CD4-positive, alpha-beta T cell (primary cell): ENCODE measurements at regions of chr9 and their contacts with region 1.

Region 1: GRCh38 chr9:18255158-18255629 is 218.8 kb upstream of the ADAMTSL1 start:
- DNase-seq: peak; percentile 41 to 81 (median 58)
- ATAC-seq: peak; percentile 69
- H3K4me3 ChIP-seq: no peak overlapping the region
- H3K4me3 Mint-ChIP-seq: no peak overlapping the region
- H3K27ac ChIP-seq: no peak overlapping the region
- H3K27ac Mint-ChIP-seq: no peak overlapping the region
- H3K4me1 ChIP-seq: no peaks in the 10 kb centered on the region
- H3K4me1 Mint-ChIP-seq: peaks cover 7% of the 10 kb centered on the region
- H3K27me3 ChIP-seq: peaks cover 0 to 3% of the 10 kb centered on the region in 2 experiments
- H3K27me3 Mint-ChIP-seq: peaks cover 27% of the 10 kb centered on the region
- CTCF ChIP-seq: peak; percentile 99

Region 2: GRCh38 chr9:18314316-18314715 is 59.1 kb after region 1 on chr9:
- CTCF ChIA-PET with region 1: no interaction called
- POLR2A ChIA-PET with region 1: no interaction called
- intact Hi-C with region 1: no loop called
- DNase-seq: no peak
- ATAC-seq: no peak
- H3K4me3 ChIP-seq: no peak overlapping the region
- H3K4me3 Mint-ChIP-seq: no peak overlapping the region
- H3K27ac ChIP-seq: no peak overlapping the region
- H3K27ac Mint-ChIP-seq: no peak overlapping the region
- H3K4me1 ChIP-seq: no peaks in the 10 kb centered on the region
- H3K4me1 Mint-ChIP-seq: no peaks in the 10 kb centered on the region
- H3K27me3 ChIP-seq: no peaks in the 10 kb centered on the region
- H3K27me3 Mint-ChIP-seq: no peaks in the 10 kb centered on the region
- CTCF ChIP-seq: no peak

Region 3: GRCh38 chr9:18947772-18948391 is 692.7 kb after region 1 on chr9:
- CTCF ChIA-PET with region 1: no interaction called
- POLR2A ChIA-PET with region 1: no interaction called
- intact Hi-C with region 1: no loop called
- DNase-seq: peak in 3 of 14 experiments; percentile 3 to 37 (median 28)
- ATAC-seq: no peak
- H3K4me3 ChIP-seq: no peak overlapping the region
- H3K4me3 Mint-ChIP-seq: no peak overlapping the region
- H3K27ac ChIP-seq: no peak overlapping the region
- H3K27ac Mint-ChIP-seq: no peak overlapping the region
- H3K4me1 ChIP-seq: no peaks in the 10 kb centered on the region
- H3K4me1 Mint-ChIP-seq: no peaks in the 10 kb centered on the region
- H3K27me3 ChIP-seq: no peaks in the 10 kb centered on the region
- H3K27me3 Mint-ChIP-seq: peaks cover 7% of the 10 kb centered on the region
- CTCF ChIP-seq: no peak

Region 4: DNA sequence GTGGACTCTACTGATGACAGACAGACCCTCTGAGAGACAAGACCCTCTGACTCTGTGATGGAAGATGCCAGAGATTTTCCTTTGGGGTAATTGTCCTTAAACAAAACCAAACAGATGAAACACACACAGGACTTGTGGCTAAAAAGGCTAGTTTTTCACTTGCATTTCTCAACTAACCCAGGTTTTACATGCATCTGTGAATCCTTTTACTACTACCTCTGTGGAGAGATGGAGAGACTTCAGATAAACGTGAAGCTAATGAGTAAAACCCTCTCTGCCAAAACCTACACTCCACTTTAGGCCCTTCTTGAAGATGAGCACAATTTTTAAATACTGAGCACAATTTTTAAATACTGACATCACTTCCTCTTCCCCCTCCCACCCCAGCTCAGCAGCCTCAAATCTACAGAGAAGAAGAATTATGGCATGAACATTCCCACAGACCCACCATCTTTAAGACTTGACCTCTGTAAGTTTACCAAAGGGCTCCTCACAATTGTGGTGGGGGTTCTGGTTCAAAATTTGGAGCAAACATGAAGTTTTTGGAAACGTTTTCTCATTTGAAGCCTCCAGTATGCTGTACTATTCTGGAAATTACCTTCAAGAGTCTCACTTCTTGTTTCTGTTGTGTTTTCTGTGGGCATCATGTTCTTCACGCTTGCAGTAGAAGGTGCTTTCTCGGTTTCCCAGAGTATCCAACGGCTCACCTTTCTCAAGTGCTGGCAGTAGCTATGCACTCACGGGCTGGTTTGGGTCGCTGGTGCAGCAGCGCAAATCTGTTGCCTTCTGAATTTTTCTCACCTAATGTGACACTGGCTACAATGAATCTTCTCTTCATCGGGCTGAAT is 1196.3 kb after region 1 on chr9:
- CTCF ChIA-PET with region 1: no interaction called
- POLR2A ChIA-PET with region 1: no interaction called
- intact Hi-C with region 1: loop called in 1 of 2 experiments (anchors 1 kb)
- DNase-seq: no peak
- ATAC-seq: no peak
- H3K4me3 ChIP-seq: no peak overlapping the region
- H3K4me3 Mint-ChIP-seq: no peak overlapping the region
- H3K27ac ChIP-seq: no peak overlapping the region
- H3K27ac Mint-ChIP-seq: no peak overlapping the region
- H3K4me1 ChIP-seq: no peaks in the 10 kb centered on the region
- H3K4me1 Mint-ChIP-seq: no peaks in the 10 kb centered on the region
- H3K27me3 ChIP-seq: no peaks in the 10 kb centered on the region
- H3K27me3 Mint-ChIP-seq: no peaks in the 10 kb centered on the region
- CTCF ChIP-seq: no peak